Activated CD8-positive, alpha-beta T cell treated with anti-CD3 and anti-CD28 coated beads for 36 hours (primary cell): ENCODE measurements at regions of chr1 and their contacts with region 1.

Region 1: GRCh38 chr1:116763787-116764465 is 9.7 kb downstream of the CD2 start:
- DNase-seq: peak; percentile 86
- ATAC-seq: peak; percentile 21
- H3K4me3 Mint-ChIP-seq: peak overlapping the region; percentile 98
- H3K27ac Mint-ChIP-seq: peak overlapping the region; percentile 99
- H3K4me1 Mint-ChIP-seq: peaks cover 83% of the 10 kb centered on the region
- H3K27me3 Mint-ChIP-seq: no peaks in the 10 kb centered on the region
- CTCF ChIP-seq: peak; percentile 39

Region 2: GRCh38 chr1:116724765-116725375 is 39.1 kb before region 1 on chr1:
- CTCF ChIA-PET with region 1: interaction called, 13 read pairs
- POLR2A ChIA-PET with region 1: interaction called, 6 read pairs
- intact Hi-C with region 1: loop called (anchors 5 kb)
- DNase-seq: peak; percentile 92
- ATAC-seq: peak; percentile 84
- H3K4me3 Mint-ChIP-seq: no peak overlapping the region
- H3K27ac Mint-ChIP-seq: peak overlapping the region; percentile 28
- H3K4me1 Mint-ChIP-seq: peaks cover 34% of the 10 kb centered on the region
- H3K27me3 Mint-ChIP-seq: no peaks in the 10 kb centered on the region
- CTCF ChIP-seq: peak; percentile 90

Region 3: DNA sequence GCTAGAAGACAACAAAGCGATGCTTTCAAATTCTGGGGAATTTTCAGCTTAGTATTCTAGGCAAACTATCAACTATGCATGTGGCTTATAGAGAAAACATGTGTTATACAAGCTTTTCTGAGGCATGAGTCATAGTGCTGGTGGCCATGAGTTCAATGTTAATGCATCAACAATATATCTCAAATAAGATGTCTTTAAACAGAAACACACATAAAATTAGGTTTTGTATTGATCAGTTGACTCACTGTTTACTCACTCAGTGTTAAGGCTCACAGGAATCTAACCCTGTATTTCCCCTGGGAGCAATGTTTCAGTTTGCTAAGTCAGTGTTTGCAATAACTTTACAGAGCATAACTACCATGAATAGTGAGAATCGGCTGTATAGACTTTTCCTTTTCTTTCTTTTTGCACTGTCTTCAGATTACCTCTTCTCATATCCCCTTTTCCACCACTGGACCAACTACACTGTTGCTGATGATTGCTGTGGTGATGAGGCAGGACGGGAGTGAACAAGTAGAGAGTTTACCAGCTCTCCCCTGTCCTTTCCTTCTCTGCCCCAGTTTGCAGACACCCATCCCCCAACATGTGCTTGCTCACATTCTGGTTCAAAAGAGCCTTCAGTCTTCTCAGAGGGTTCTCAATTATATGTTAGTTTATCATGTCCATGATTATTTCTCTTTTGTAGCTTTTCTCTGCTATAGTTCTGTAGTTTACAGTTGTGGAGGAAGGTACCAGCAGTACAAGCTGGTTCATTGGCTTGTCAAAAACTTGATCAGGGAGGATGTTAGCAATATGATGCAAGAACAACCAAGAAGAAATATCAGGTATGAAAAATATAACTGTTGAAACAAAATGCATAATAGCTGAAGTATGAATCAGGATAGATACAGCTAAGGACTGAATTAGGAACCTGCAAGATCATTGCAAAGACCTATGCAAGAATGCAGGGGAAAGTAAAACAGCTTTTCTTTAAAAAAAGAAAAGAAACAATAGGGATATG is 14.2 kb after region 1 on chr1:
- CTCF ChIA-PET with region 1: interaction called, 12 read pairs
- POLR2A ChIA-PET with region 1: interaction called, 850 read pairs
- intact Hi-C with region 1: no loop called
- DNase-seq: no peak
- ATAC-seq: peak; percentile 72
- H3K4me3 Mint-ChIP-seq: peak overlapping the region; percentile 40
- H3K27ac Mint-ChIP-seq: peak overlapping the region; percentile 86
- H3K4me1 Mint-ChIP-seq: peaks cover 47% of the 10 kb centered on the region
- H3K27me3 Mint-ChIP-seq: no peaks in the 10 kb centered on the region
- CTCF ChIP-seq: no peak

Region 4: GRCh38 chr1:116806245-116806644 is 42.3 kb after region 1 on chr1:
- CTCF ChIA-PET with region 1: interaction called, 109 read pairs
- POLR2A ChIA-PET with region 1: interaction called, 520 read pairs
- intact Hi-C with region 1: loop called (anchors 2 kb)
- DNase-seq: peak; percentile 93
- ATAC-seq: peak; percentile 68
- H3K4me3 Mint-ChIP-seq: peak overlapping the region; percentile 94
- H3K27ac Mint-ChIP-seq: peak overlapping the region; percentile 91
- H3K4me1 Mint-ChIP-seq: peaks cover 78% of the 10 kb centered on the region
- H3K27me3 Mint-ChIP-seq: no peaks in the 10 kb centered on the region
- CTCF ChIP-seq: no peak

Region 5: DNA sequence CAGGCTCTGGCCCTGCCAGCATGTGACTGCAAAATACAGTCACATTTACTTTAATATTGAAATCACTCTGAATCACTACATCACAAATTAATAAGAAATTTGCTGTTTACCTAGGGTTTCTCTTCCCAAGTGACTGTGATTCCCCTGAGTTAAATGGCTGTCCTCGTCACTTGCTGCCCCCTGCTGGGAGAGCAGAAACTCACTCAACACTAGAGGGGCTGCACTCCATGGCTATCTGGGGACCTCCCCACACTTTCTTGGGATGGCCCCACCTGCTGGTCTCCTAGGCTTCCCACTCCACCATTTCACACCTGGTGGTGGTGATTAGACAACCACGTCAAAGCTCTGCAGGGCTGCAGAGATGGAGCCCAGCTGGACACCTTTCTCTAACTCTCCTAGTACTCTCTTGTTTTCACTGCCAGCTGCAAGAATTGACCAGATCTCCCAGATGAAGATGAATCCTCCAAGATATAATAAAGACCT is 53.7 kb after region 1 on chr1:
- CTCF ChIA-PET with region 1: interaction called, 167 read pairs
- POLR2A ChIA-PET with region 1: interaction called, 217 read pairs
- intact Hi-C with region 1: loop called (anchors 1 kb)
- DNase-seq: peak; percentile 80
- ATAC-seq: peak; percentile 67
- H3K4me3 Mint-ChIP-seq: peak overlapping the region; percentile 52
- H3K27ac Mint-ChIP-seq: peak overlapping the region; percentile 96
- H3K4me1 Mint-ChIP-seq: peaks cover 52% of the 10 kb centered on the region
- H3K27me3 Mint-ChIP-seq: no peaks in the 10 kb centered on the region
- CTCF ChIP-seq: peak; percentile 95

Region 6: GRCh38 chr1:116826818-116827606 is 63.1 kb after region 1 on chr1:
- CTCF ChIA-PET with region 1: interaction called, 20 read pairs
- POLR2A ChIA-PET with region 1: interaction called, 139 read pairs
- intact Hi-C with region 1: no loop called
- DNase-seq: peak; percentile 90
- ATAC-seq: peak; percentile 91
- H3K4me3 Mint-ChIP-seq: peak overlapping the region; percentile 76
- H3K27ac Mint-ChIP-seq: peak overlapping the region; percentile 97
- H3K4me1 Mint-ChIP-seq: peaks cover 55% of the 10 kb centered on the region
- H3K27me3 Mint-ChIP-seq: no peaks in the 10 kb centered on the region
- CTCF ChIP-seq: no peak